Activated CD4-positive, alpha-beta memory T cell treated with anti-CD3 and anti-CD28 coated beads for 36 hours (primary cell): ENCODE measurements at regions of chr19 and their contacts with region 1.

Region 1: DNA sequence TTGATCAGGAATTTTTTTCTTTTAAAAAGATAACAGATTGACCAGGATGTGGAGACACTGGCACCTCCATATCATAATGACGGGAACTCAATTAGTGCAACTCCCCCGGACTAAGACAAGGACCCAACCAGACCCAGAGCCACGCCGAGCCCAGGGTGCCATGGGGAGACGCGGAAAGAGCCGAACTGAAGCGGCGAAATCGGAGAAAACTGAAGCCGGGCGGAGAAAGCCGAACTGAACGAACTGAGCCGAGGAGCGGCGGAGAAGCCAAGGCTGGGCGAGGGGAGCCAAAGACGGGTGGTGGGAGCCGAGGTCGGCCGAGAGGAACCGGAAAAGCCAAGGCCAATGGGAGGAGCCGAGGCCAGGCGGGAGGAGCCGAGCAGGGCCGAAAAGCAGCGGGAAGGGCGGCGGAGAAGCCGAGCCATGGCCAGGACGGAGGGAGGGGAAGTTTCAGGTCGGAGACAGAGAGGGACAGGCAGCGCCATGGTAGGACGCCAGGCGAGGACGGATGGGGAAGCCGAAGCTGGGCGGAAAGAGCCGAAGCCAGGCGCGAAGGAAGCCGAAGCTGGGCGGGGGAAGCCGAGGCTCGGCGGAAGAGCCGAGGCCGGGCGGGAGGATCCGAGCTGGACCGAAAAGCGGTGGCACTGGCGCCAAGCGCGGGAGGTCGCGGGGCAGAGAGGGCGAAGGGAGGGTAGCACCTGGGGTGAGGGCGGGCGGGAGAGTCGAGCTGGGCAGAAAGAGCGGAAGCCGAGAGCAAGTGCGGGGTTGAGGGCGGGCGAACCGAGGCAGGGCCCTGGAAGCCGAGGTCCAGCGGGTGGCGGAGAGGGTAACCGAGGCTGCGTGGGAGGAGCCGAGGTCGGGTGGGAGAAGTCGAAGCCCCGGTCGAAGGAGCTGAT is 29.4 kb downstream of the ZNF557 start:
- DNase-seq: peak; percentile 91
- H3K4me3 Mint-ChIP-seq: peak overlapping the region; percentile 89
- H3K27ac Mint-ChIP-seq: peak overlapping the region; percentile 92
- H3K4me1 Mint-ChIP-seq: peaks cover 21% of the 10 kb centered on the region
- H3K27me3 Mint-ChIP-seq: peaks cover 1% of the 10 kb centered on the region

Region 2: GRCh38 chr19:6906559-6907060 is 192.3 kb before region 1 on chr19:
- CTCF ChIA-PET with region 1: no interaction called
- POLR2A ChIA-PET with region 1: no interaction called
- intact Hi-C with region 1: no loop called
- DNase-seq: no peak
- H3K4me3 Mint-ChIP-seq: no peak overlapping the region
- H3K27ac Mint-ChIP-seq: no peak overlapping the region
- H3K4me1 Mint-ChIP-seq: no peaks in the 10 kb centered on the region
- H3K27me3 Mint-ChIP-seq: no peaks in the 10 kb centered on the region

Region 3: DNA sequence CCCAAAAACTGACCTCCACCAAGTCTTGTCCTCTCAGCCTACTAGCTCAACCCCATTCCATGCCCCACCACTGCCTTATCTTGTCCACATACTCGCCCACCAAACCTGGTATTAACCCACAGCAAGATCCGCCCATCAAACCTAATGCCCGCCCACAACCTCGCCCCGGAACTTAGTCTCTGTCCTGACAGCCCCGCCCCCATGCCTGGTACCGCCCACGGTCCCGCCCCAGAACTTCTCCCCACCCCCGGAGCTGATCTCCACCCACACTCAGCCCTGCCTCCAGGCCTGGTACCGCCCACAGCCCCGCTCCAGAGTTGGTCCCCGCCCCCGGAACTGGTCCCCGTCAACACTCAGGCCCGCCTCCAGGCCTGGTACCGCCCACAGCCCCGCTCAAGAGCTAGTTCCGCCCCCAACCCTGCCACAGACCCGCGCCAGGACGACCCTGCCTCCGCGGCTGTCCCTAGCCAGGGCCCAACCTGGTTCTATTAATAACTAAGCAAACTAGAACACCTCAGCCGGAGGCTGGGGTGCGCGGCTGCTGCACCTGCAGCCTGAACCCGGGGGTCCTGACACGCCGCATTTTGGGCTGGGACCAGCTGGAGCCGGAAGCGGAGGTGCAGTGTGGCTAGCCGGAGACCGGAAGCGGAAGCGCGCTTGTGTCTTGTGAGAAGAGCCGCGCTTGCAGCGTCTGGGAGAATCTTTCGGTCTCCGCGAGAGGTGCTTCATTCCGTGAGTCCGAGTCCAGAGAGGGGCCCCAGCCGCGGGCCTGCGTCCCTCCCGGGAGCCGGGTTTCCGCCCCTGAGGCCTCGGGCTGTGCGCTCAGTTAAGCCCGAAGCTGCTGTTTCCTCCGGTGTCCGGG is 29.7 kb before region 1 on chr19 and contains the start of gene ZNF557:
- CTCF ChIA-PET with region 1: interaction called, 14 read pairs
- POLR2A ChIA-PET with region 1: interaction called, 9 read pairs
- intact Hi-C with region 1: no loop called
- DNase-seq: peak; percentile 99
- H3K4me3 Mint-ChIP-seq: peak within 1 kb of the TSS; percentile 87
- H3K27ac Mint-ChIP-seq: peak within 1 kb of the TSS; percentile 83
- H3K4me1 Mint-ChIP-seq: peaks cover 11% of the 10 kb centered on the region
- H3K27me3 Mint-ChIP-seq: no peaks in the 10 kb centered on the region
- total RNA-seq, gene ZNF557: 7.6 to 8.0 TPM

Region 4: DNA sequence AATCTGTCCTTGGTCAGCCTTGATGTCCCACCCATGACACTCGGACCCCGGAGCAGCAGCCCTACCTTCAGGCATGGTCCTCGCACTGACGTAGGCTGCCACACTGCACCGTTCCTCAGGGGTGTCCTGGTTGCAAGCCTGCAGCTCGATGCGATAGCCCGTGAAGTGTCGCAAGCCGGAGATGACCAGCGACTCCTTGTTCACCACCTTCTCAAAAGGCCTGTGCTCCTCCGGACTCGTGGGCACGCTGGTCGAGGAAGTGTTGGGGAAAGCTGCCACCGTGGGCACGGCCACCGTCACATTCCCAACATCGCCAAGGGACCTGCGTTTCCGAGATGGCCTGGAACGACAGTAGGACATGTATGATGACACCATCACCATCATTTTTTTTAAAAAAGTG is 43.8 kb after region 1 on chr19:
- CTCF ChIA-PET with region 1: no interaction called
- POLR2A ChIA-PET with region 1: no interaction called
- intact Hi-C with region 1: no loop called
- DNase-seq: no peak
- H3K4me3 Mint-ChIP-seq: no peak overlapping the region
- H3K27ac Mint-ChIP-seq: no peak overlapping the region
- H3K4me1 Mint-ChIP-seq: no peaks in the 10 kb centered on the region
- H3K27me3 Mint-ChIP-seq: no peaks in the 10 kb centered on the region

Region 5: GRCh38 chr19:7177926-7178325 is 79.0 kb after region 1 on chr19:
- CTCF ChIA-PET with region 1: no interaction called
- POLR2A ChIA-PET with region 1: no interaction called
- intact Hi-C with region 1: no loop called
- DNase-seq: no peak
- H3K4me3 Mint-ChIP-seq: no peak overlapping the region
- H3K27ac Mint-ChIP-seq: no peak overlapping the region
- H3K4me1 Mint-ChIP-seq: peaks cover 18% of the 10 kb centered on the region
- H3K27me3 Mint-ChIP-seq: peaks cover 3% of the 10 kb centered on the region

Region 6: GRCh38 chr19:7326105-7326877 is 227.3 kb after region 1 on chr19:
- CTCF ChIA-PET with region 1: interaction called, 16 read pairs
- POLR2A ChIA-PET with region 1: no interaction called
- intact Hi-C with region 1: no loop called
- DNase-seq: peak; percentile 63
- H3K4me3 Mint-ChIP-seq: no peak overlapping the region
- H3K27ac Mint-ChIP-seq: no peak overlapping the region
- H3K4me1 Mint-ChIP-seq: no peaks in the 10 kb centered on the region
- H3K27me3 Mint-ChIP-seq: peaks cover under 1% of the 10 kb centered on the region

Region 7: GRCh38 chr19:7348587-7349230 is 249.8 kb after region 1 on chr19 and contains the start of gene ARHGEF18:
- CTCF ChIA-PET with region 1: interaction called, 13 read pairs
- POLR2A ChIA-PET with region 1: interaction called, 6 read pairs
- intact Hi-C with region 1: no loop called
- DNase-seq: peak; percentile 66
- H3K4me3 Mint-ChIP-seq: peak within 1 kb of the TSS; percentile 79
- H3K27ac Mint-ChIP-seq: peak within 1 kb of the TSS; percentile 94
- H3K4me1 Mint-ChIP-seq: peaks cover 53% of the 10 kb centered on the region
- H3K27me3 Mint-ChIP-seq: no peaks in the 10 kb centered on the region
- total RNA-seq, gene ARHGEF18: 36.9 to 37.1 TPM